Caco-2 (cell line): ENCODE measurements at regions of chr4 and their contacts with region 1.

Region 1: DNA sequence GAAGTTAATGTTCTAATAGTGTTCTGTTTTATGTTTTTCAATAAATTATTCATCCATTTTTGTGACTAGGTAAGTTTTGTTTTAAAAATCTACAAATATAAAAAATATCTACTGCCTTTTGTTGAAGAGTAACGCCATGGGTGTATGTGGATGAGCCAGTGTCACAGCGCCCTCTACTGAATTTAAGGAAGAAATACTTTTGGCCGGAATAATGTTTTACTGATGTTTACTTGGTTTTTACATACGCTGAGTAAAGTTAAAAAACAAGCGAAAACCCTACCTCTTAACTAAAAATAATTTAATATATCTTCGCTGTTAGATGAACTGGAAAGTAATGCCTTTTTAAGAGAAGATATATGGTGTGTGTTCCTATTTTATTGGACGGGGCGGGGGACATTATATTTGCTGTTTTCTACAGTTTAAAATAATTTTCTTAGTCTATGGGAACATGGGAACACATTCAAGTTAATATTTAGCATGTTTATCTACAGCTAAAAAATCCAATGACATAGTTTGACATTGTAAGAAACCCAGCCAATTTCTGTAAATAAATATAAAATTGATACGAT is 86.1 kb downstream of the CPE start:
- DNase-seq: peak in 1 of 2 experiments; percentile 19
- H3K4me3 ChIP-seq: no peak overlapping the region
- H3K4me3 Mint-ChIP-seq: no peak overlapping the region
- H3K27ac Mint-ChIP-seq: no peak overlapping the region
- H3K4me1 ChIP-seq: peaks cover 19% of the 10 kb centered on the region
- H3K4me1 Mint-ChIP-seq: peaks cover 13% of the 10 kb centered on the region
- H3K27me3 ChIP-seq: no peaks in the 10 kb centered on the region
- H3K27me3 Mint-ChIP-seq: no peaks in the 10 kb centered on the region
- CTCF ChIP-seq: peak; percentile 66 to 71

Region 2: DNA sequence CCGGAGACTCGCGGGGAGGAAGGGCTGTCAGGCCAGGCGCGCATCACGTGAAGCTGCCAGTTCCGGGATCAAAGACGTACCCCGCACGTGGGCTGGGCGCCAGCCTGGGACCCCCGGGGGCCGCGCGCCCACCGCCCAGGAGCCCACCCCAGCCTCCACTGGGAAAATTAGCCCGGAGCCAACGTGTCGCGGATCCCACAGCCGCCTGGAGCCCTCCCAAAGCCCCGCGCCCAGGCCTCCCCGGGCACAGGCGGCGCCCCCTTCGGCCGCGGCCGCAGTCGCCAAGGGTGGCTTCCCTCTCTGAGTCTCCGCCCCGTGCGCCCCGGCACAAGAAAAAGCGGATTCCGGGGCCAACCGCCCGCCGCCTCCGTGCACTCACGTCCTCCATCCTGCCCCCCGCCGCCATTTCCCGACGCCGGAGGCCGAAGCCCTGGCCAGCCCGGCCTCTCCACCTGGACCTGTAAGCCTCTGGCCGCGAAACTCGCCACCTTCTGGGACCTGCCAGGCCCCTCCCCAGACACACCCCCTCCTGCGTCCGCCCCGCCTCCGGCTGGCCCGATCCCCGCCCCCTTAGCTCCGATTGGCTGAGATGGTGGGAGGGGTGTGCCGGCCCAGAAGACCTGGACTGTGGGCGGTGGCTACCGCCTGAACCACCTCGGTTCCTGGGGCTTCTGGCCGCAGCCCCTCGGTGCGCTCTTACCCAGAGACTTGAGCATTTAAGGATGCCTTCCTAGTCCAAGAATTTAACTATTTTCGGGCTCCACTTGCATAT is 352.3 kb before region 1 on chr4 and contains the start of gene TMEM192:
- CTCF ChIA-PET with region 1: interaction called, 3 read pairs
- POLR2A ChIA-PET with region 1: no interaction called
- intact Hi-C with region 1: loop called (anchors 5 kb)
- DNase-seq: peak; percentile 95 to 96
- H3K4me3 ChIP-seq: peak within 1 kb of the TSS; percentile 89
- H3K4me3 Mint-ChIP-seq: peak within 1 kb of the TSS; percentile 96
- H3K27ac Mint-ChIP-seq: peak within 1 kb of the TSS; percentile 90
- H3K4me1 ChIP-seq: peaks cover 5% of the 10 kb centered on the region
- H3K4me1 Mint-ChIP-seq: peaks cover 9% of the 10 kb centered on the region
- H3K27me3 ChIP-seq: no peaks in the 10 kb centered on the region
- H3K27me3 Mint-ChIP-seq: no peaks in the 10 kb centered on the region
- CTCF ChIP-seq: peak in 1 of 2 experiments; percentile 18
- total RNA-seq, gene TMEM192: 18.6 and 19.4 TPM in 2 replicates

Region 3: GRCh38 chr4:165207431-165208220 is 257.3 kb before region 1 on chr4 and contains the start of gene KLHL2:
- CTCF ChIA-PET with region 1: no interaction called
- POLR2A ChIA-PET with region 1: no interaction called
- intact Hi-C with region 1: loop called (anchors 10 kb)
- DNase-seq: peak; percentile 74 to 83
- H3K4me3 ChIP-seq: peak within 1 kb of the TSS; percentile 85
- H3K4me3 Mint-ChIP-seq: peak within 1 kb of the TSS; percentile 74
- H3K27ac Mint-ChIP-seq: peak within 1 kb of the TSS; percentile 49
- H3K4me1 ChIP-seq: peaks cover 25% of the 10 kb centered on the region
- H3K4me1 Mint-ChIP-seq: peaks cover 27% of the 10 kb centered on the region
- H3K27me3 ChIP-seq: no peaks in the 10 kb centered on the region
- H3K27me3 Mint-ChIP-seq: no peaks in the 10 kb centered on the region
- CTCF ChIP-seq: no peak
- total RNA-seq, gene KLHL2: 14.5 and 15.9 TPM in 2 replicates

Region 4: DNA sequence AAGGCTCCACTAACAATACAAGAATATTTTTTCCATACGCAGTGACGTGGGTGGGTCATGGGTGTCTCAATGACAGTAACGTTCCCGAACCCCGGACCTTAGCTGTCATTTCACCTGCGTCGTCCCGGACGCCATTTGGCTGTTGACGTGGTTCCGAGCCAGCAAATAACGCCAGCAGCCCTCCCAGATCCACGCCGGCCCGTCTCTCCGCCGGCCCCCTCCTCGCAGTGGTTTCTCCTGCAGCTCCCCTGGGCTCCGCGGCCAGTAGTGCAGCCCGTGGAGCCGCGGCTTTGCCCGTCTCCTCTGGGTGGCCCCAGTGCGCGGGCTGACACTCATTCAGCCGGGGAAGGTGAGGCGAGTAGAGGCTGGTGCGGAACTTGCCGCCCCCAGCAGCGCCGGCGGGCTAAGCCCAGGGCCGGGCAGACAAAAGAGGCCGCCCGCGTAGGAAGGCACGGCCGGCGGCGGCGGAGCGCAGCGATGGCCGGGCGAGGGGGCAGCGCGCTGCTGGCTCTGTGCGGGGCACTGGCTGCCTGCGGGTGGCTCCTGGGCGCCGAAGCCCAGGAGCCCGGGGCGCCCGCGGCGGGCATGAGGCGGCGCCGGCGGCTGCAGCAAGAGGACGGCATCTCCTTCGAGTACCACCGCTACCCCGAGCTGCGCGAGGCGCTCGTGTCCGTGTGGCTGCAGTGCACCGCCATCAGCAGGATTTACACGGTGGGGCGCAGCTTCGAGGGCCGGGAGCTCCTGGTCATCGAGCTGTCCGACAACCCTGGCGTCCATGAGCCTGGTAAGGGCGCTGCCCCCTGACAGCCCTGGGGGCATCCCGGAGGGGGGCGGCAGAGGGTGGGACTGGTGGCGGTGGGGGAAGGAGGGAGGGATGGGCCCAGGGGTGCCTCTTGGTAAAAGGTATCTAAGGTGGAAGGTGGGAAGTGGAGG is 85.9 kb before region 1 on chr4 and contains the start of gene CPE:
- CTCF ChIA-PET with region 1: interaction called, 3 read pairs
- POLR2A ChIA-PET with region 1: no interaction called
- intact Hi-C with region 1: loop called (anchors 1 kb)
- DNase-seq: peak; percentile 81 to 87
- H3K4me3 ChIP-seq: peak within 1 kb of the TSS; percentile 37
- H3K4me3 Mint-ChIP-seq: peak within 1 kb of the TSS; percentile 87
- H3K27ac Mint-ChIP-seq: no peak within 1 kb of the TSS
- H3K4me1 ChIP-seq: peaks cover 5% of the 10 kb centered on the region
- H3K4me1 Mint-ChIP-seq: peaks cover 7% of the 10 kb centered on the region
- H3K27me3 ChIP-seq: no peaks in the 10 kb centered on the region
- H3K27me3 Mint-ChIP-seq: peaks cover 19% of the 10 kb centered on the region
- CTCF ChIP-seq: peak in 1 of 2 experiments; percentile 73
- total RNA-seq, gene CPE: 4.6 and 5.9 TPM in 2 replicates

Region 5: DNA sequence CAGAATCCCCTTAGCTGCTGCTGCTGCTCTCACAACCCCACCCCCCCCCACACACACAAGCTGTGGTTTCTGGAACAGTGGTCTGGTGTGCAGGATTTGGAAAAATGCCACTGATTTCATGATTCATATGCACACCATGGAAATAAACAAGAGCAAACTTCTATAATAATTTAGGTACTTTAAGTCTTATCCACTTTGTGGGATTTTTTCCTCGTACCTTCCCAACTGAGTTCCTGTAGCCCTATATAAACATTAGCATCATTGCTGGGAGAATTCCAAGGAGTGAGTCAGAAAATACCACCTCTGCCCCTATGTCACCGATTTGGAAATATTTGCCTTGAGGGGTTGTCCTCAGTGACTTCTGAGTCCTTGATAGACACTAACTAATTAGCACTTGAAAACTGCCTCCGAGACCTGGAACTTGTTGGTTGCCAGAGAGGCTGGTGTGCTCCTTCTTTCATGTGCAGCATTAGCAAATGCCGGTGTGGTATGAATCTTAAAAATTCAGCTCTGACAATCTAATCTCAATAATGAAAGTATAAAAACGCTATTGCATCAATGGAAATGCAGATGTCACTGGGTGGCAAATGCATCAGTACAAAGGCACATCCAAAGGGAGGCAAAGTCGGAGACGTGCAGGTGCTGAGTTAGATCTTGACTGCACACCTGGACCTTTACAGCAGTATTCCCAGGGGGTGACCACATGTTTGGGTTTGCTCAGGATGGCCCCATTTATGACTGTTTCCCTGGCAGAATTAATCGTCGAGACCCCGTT is 24.3 kb before region 1 on chr4:
- CTCF ChIA-PET with region 1: no interaction called
- POLR2A ChIA-PET with region 1: no interaction called
- intact Hi-C with region 1: loop called (anchors 1 kb)
- DNase-seq: peak; percentile 47 to 51
- H3K4me3 ChIP-seq: no peak overlapping the region
- H3K4me3 Mint-ChIP-seq: no peak overlapping the region
- H3K27ac Mint-ChIP-seq: no peak overlapping the region
- H3K4me1 ChIP-seq: peaks cover 7% of the 10 kb centered on the region; the same call in 1 of the 2 replicates
- H3K4me1 Mint-ChIP-seq: peaks cover 13% of the 10 kb centered on the region
- H3K27me3 ChIP-seq: no peaks in the 10 kb centered on the region
- H3K27me3 Mint-ChIP-seq: no peaks in the 10 kb centered on the region
- CTCF ChIP-seq: no peak